AG04449 (cell line): ENCODE measurements at regions of chr13 and their contacts with region 1.

Region 1: GRCh38 chr13:30114571-30115256 is 192.6 kb downstream of the KATNAL1 start:
- DNase-seq: no peak
- H3K4me3 ChIP-seq: peak overlapping the region; percentile 60
- CTCF ChIP-seq: peak; percentile 95

Region 2: DNA sequence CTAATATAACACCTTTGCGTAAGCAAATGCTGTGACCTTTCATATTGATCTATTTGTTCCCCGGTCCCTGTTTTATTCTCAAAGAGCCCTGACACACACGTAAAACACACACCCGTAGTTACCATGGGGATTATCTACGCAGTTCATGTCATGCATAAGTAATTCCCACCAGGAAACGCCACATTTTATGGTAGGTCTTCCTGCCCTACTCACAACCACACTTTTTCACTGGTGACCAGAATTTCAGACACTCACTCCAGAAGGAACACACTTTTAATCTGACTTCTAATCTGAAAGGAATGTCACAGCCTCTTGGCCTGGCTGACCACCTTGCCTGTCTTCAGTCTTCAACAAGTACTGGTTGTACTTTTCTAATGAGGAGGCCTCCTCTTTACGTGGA is 566.0 kb before region 1 on chr13:
- CTCF ChIA-PET with region 1: no interaction called
- POLR2A ChIA-PET with region 1: no interaction called
- DNase-seq: no peak
- H3K4me3 ChIP-seq: no peak overlapping the region
- CTCF ChIP-seq: no peak

Region 3: GRCh38 chr13:29707876-29708543 is 406.7 kb before region 1 on chr13:
- CTCF ChIA-PET with region 1: interaction called, 29 read pairs
- POLR2A ChIA-PET with region 1: no interaction called
- DNase-seq: no peak
- H3K4me3 ChIP-seq: no peak overlapping the region
- CTCF ChIP-seq: peak; percentile 76

Region 4: DNA sequence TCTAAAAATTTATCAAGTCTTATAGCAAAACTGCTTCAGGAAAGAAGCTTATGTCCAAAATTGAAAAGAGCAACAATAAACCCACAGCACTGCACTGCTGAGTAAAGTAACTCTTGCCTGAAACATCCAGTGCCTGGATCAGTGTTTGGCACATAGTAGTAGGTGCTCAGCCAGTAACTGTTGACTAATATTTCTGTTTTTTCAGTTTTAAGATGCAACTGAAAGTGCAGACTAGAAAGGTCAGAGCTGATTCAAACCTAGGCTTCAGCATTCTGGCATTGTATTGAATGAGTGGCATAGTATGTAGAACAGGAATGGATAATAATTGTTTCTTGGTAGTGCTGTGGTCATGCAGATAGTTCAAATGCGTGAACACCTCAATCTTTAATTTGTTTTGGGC is 331.9 kb before region 1 on chr13:
- CTCF ChIA-PET with region 1: interaction called, 16 read pairs
- POLR2A ChIA-PET with region 1: no interaction called
- DNase-seq: no peak
- H3K4me3 ChIP-seq: no peak overlapping the region
- CTCF ChIP-seq: no peak

Region 5: DNA sequence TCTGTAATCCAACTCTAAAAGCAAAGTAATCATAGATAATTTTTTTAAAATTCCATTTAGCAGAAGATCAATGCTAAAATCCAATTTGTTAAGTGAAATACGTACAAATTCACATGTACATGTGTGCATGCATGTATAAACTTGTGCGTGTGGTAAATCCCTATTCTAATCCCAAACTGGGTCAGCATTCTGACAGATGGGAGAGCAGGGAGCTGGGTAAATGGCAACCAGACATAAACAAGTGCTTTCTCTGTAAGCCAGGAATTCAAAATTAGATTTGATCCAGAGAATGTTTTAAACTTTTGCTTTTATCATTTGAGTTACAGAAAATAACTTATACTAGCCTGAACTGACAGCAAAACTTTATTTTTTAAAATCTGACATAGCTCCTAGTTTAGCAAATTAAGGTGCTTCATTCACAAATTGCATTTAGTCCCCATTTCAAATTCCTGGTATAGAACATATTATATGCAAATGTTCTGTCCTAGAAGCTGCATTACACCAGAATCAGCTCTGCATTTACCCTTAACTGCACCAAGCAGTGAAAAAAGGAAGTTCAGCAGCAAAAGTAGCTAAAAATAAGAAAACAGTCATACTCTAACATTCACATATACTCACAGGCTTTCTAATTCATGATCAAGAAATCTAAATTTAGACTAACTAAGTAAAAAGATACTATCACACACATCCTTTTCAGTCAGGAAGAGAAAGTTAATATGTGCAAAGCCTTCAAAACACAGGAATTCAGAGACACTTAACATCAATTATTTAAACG is 296.9 kb before region 1 on chr13:
- CTCF ChIA-PET with region 1: interaction called, 19 read pairs
- POLR2A ChIA-PET with region 1: no interaction called
- DNase-seq: no peak
- H3K4me3 ChIP-seq: no peak overlapping the region
- CTCF ChIP-seq: no peak

Region 6: DNA sequence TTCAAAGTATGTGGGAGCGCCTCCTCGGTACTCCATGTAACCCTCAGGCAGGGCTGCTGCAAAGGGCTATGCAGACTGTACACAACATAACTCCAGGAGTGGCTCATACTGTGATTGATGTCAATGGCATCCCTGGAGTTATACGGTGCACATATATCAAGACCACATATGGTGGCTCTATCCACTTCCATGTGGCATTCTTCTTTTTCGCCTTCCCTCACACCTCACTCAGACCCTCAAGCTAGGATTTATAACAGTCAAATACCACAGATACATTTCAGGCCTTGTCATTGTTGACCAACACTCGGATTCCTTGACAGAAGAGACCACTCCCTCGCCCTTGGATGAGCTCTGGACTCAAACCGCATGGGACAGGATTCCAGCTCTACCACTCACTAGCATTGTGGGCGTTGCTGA is 253.0 kb before region 1 on chr13:
- CTCF ChIA-PET with region 1: interaction called, 360 read pairs
- POLR2A ChIA-PET with region 1: interaction called, 7 read pairs
- DNase-seq: peak; percentile 98
- H3K4me3 ChIP-seq: no peak overlapping the region
- CTCF ChIP-seq: no peak

Region 7: DNA sequence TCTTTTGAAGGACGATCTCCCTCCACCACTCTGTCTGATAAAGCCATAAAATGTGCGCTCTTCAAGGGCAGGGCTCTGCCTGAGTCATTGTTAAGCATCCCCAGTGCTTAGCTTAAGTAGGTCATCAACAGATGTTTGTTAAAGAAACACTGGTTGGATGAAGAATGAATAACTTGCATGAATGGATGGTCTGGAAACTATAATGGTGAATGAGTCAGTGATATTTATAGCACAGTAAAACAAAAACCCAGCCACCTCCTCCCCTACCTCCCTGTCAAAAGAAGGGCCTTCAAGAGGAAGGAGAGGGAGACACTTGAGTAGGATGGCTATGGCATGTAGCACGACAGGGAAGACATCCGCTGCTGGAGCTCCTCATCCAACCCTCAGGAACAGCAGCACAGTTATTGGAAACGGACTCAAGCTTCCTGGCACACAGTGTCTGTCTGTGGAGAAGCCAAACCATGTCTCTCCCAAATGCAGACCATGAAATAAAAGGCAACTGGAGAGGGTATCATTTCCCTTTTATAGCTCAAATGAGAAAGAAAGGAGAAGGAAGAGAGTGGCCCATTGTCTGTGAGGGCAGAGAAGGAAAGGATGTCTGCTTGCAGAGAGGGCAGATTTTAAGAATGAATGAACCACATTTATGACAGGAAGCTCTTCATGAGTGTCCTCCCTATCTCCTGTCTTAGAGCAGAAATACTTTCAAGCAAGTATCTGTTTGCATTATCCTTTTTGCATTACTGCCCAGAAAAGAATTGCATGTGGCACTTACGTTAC is 80.8 kb before region 1 on chr13:
- CTCF ChIA-PET with region 1: interaction called, 24 read pairs
- POLR2A ChIA-PET with region 1: no interaction called
- DNase-seq: peak; percentile 85
- H3K4me3 ChIP-seq: no peak overlapping the region
- CTCF ChIP-seq: no peak

Region 8: DNA sequence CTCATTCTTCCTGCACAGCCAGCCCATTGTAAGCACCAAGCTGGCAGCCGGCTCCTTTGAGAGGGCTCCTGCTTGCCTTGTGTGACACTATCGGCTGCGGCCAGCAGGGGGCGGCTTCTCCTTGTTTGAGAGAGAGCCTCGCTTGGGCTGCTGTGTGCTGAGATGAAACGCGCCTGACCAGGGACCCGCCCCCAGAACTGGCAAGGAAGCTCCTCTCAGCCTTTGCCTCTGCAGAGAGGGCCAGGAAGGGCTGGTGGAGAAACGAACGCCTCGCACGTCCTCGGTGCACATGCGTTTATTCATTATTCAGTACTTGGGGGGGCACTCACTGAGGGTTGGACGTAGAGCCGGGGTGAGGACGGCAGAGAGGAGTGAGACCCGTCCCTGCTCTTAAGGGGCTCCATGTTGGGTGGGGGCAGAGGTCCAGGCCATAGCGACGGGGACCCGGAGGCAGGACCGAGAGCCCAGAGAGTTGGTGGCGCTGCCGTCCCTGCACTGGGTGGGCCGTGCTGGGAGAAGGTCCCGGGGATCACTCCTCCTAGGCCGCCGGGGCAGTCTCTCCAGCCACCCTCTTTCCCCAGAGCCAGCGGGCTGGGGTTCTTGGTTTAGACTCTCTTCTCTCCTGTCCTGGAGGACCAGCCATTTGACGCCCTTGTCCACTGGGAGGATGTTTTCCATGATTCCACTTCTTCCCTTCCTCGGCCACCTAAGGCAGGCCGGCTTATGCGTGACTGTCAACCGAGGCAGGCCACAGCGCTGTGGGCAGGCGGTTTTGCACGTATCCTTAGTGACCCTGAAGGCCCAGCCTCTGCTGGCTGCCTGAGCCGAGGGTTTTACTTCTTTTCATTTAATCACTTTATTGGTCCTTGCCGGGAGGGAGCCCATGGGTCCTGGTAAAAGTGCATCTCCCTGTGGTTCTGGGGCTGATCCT is 18.2 kb after region 1 on chr13:
- CTCF ChIA-PET with region 1: interaction called, 101 read pairs
- POLR2A ChIA-PET with region 1: no interaction called
- DNase-seq: peak; percentile 52
- H3K4me3 ChIP-seq: no peak overlapping the region
- CTCF ChIP-seq: peak; percentile 90

Region 9: DNA sequence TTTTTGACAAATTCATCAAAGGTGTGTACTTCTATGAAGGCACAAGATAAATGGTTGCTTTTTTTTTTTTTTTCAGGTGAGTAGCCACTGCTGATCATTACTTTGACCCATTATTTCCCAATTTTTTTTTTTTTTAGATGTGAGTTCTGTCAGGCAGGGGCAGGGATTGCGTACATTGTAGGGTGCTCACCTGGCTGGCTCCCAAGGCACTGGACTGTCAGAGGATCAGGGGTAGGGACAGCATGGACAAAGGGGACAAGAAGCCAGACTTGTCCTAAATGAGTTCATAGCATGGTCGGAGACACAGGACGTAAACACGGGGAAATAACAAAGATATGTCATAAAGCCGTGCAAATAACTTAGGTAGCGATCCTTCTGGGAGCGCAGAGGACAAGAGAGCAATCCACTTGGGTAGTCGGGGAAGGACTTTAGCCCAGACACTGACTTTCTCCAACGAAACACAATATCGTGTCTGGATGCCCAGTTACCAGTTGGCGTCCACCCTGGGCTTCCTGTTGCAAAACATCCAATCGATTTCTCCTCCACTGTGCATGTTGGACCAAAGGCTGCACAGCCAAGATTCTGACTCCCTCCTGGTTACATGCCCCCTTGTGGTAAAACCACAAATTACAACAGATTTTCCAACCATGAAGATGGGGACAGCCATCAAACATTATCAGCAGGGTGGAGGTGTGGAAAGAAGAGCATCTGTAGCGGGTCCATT is 220.1 kb after region 1 on chr13:
- CTCF ChIA-PET with region 1: no interaction called
- POLR2A ChIA-PET with region 1: no interaction called
- DNase-seq: no peak
- H3K4me3 ChIP-seq: no peak overlapping the region
- CTCF ChIP-seq: no peak